ENCODE measurements at regions of chr1 and their contacts with region 1.

Region 1: GRCh38 chr1:161225534-161226319 is at the start of gene TOMM40L:
- DNase-seq: peak; percentile 98
- ATAC-seq: peak; percentile 71
- H3K4me3 ChIP-seq: peak within 1 kb of the TSS; percentile 81 to 82 (median 81)
- H3K27ac ChIP-seq: peak within 1 kb of the TSS; percentile 99
- H3K4me1 ChIP-seq: peaks cover 59% of the 10 kb centered on the region
- H3K27me3 ChIP-seq: no peaks in the 10 kb centered on the region; a peak in 1 of 5 replicates
- CTCF ChIP-seq: peak; percentile 79
- EP300 ChIP-seq: no peak; a peak in 1 of 4 replicates
- POLR2A ChIP-seq: peak; percentile 47 to 76
- RAD21 ChIP-seq: no peak; the same call in 1 of the 2 replicates
- total RNA-seq, gene TOMM40L: 26.2 and 29.1 TPM in 2 replicates

Region 2: DNA sequence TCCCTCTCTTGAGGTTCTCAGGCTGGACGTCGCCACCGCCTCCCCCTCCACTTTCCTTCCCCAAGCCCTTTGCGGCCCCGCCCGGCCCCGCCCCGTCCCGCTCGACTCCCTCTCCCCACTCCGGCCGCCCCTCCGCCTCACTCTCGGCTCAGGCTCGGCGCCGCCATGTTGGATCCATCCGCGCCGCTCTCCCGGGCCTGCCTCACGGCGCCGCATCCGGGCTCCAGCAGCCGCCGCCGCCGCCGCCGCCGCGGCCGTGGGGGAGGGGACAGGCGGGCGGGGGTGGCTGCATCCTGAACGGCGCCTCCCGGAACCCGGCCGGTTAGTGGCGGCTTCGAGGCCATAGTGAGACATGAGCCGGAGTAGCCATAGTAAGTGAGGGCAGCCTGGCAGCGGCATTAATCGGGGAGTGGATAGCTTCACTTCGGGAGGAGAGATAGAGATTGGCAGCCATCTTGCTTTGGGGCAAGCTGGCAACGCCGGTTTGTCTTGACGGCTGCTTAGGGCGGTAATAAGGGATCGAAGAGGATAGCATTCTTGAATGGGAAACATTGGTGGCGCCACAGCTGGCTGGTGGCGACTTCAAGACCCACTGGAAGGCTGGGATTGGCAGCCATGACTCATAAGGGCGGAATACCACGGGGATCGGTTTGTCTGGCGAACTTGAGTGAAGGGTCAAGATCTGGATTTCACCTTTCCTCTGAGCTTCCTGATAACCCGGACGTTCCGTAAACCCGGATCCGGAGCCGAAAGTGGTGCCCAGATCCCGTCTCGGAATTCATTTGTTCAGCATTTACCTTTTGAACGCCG is 93.1 kb before region 1 on chr1 and contains the start of gene DEDD:
- CTCF ChIA-PET with region 1: no interaction called
- POLR2A ChIA-PET with region 1: interaction called, 16 read pairs
- in situ Hi-C with region 1: no loop called
- intact Hi-C with region 1: no loop called
- DNase-seq: peak; percentile 92
- ATAC-seq: peak; percentile 96
- H3K4me3 ChIP-seq: peak within 1 kb of the TSS; percentile 79 to 82 (median 80)
- H3K27ac ChIP-seq: peak within 1 kb of the TSS; percentile 90
- H3K4me1 ChIP-seq: peaks cover 27% of the 10 kb centered on the region
- H3K27me3 ChIP-seq: no peaks in the 10 kb centered on the region; a peak in 1 of 5 replicates
- CTCF ChIP-seq: peak; percentile 43; the same call in 1 of the 2 replicates
- EP300 ChIP-seq: no peak
- POLR2A ChIP-seq: peak in 1 of 2 experiments; percentile 51; a peak in 2 of 4 replicates
- RAD21 ChIP-seq: no peak
- total RNA-seq, gene DEDD: 12.6 and 14.0 TPM in 2 replicates

Region 3: GRCh38 chr1:161201828-161202725 is 23.6 kb before region 1 on chr1 and contains the start of gene NDUFS2:
- CTCF ChIA-PET with region 1: no interaction called
- POLR2A ChIA-PET with region 1: interaction called, 357 read pairs
- in situ Hi-C with region 1: no loop called
- intact Hi-C with region 1: loop called (anchors 1 kb)
- DNase-seq: peak; percentile 97
- ATAC-seq: peak; percentile 86
- H3K4me3 ChIP-seq: peak within 1 kb of the TSS; percentile 73 to 85 (median 80)
- H3K27ac ChIP-seq: peak within 1 kb of the TSS; percentile 70
- H3K4me1 ChIP-seq: peaks cover 78% of the 10 kb centered on the region
- H3K27me3 ChIP-seq: no peaks in the 10 kb centered on the region; a peak in 1 of 5 replicates
- CTCF ChIP-seq: no peak; the same call in none of the 2 replicates
- EP300 ChIP-seq: no peak
- POLR2A ChIP-seq: peak; percentile 80 to 85
- RAD21 ChIP-seq: 0 out of 2 replicates have a peak, but pooled peaks have one; percentile 30
- total RNA-seq, gene NDUFS2: 118 and 129 TPM in 2 replicates

Region 4: GRCh38 chr1:161238039-161238473 is 12.3 kb after region 1 on chr1 and contains the start of gene NR1I3:
- CTCF ChIA-PET with region 1: no interaction called
- POLR2A ChIA-PET with region 1: interaction called, 52 read pairs
- in situ Hi-C with region 1: no loop called
- intact Hi-C with region 1: loop called (anchors 1 kb)
- DNase-seq: peak; percentile 86
- ATAC-seq: peak; percentile 92
- H3K4me3 ChIP-seq: peak within 1 kb of the TSS in 1 of 3 experiments; percentile 37; a peak in 3 of 6 replicates
- H3K27ac ChIP-seq: peak within 1 kb of the TSS; percentile 74
- H3K4me1 ChIP-seq: peaks cover 42% of the 10 kb centered on the region
- H3K27me3 ChIP-seq: peaks cover 0 to 3% of the 10 kb centered on the region in 2 experiments; a peak in 1 of 5 replicates
- CTCF ChIP-seq: no peak
- EP300 ChIP-seq: peak; percentile 44 to 81; a peak in 3 of 4 replicates
- POLR2A ChIP-seq: no peak
- RAD21 ChIP-seq: no peak
- total RNA-seq, gene NR1I3: 0.60 and 0.95 TPM in 2 replicates

Region 5: GRCh38 chr1:161305867-161306519 is 80.3 kb after region 1 on chr1:
- CTCF ChIA-PET with region 1: no interaction called
- POLR2A ChIA-PET with region 1: interaction called, 12 read pairs
- in situ Hi-C with region 1: no loop called
- intact Hi-C with region 1: loop called (anchors 5 kb)
- DNase-seq: peak; percentile 47
- ATAC-seq: peak; percentile 83
- H3K4me3 ChIP-seq: peak overlapping the region; percentile 45 to 73 (median 63); a peak in 5 of 6 replicates
- H3K27ac ChIP-seq: peak overlapping the region; percentile 33
- H3K4me1 ChIP-seq: peaks cover 67% of the 10 kb centered on the region
- H3K27me3 ChIP-seq: no peaks in the 10 kb centered on the region
- CTCF ChIP-seq: peak; percentile 57
- EP300 ChIP-seq: no peak
- POLR2A ChIP-seq: peak in 1 of 2 experiments; percentile 62; a peak in 1 of 4 replicates
- RAD21 ChIP-seq: no peak

Region 6: GRCh38 chr1:161382214-161383019 is 156.7 kb after region 1 on chr1:
- CTCF ChIA-PET with region 1: interaction called, 3 read pairs
- POLR2A ChIA-PET with region 1: interaction called, 8 read pairs
- in situ Hi-C with region 1: loop called (anchors 10 kb)
- intact Hi-C with region 1: loop called (anchors 1 kb)
- DNase-seq: peak; percentile 48
- ATAC-seq: peak; percentile 83
- H3K4me3 ChIP-seq: no peak overlapping the region
- H3K27ac ChIP-seq: no peak overlapping the region
- H3K4me1 ChIP-seq: peaks cover 25% of the 10 kb centered on the region
- H3K27me3 ChIP-seq: no peaks in the 10 kb centered on the region
- CTCF ChIP-seq: peak; percentile 69
- EP300 ChIP-seq: no peak
- POLR2A ChIP-seq: no peak
- RAD21 ChIP-seq: peak; percentile 52; the same call in 1 of the 2 replicates

Measured in HepG2 (cell line).